Dendritic cell treated with granulocyte-macrophage colony-stimulating factor and Interleukin-4, amounts not matched to agents 40 ng/mL and 50 ng/mL, for 4 days (primary cell): ENCODE measurements at regions of chr18 and their contacts with region 1.

Region 1: DNA sequence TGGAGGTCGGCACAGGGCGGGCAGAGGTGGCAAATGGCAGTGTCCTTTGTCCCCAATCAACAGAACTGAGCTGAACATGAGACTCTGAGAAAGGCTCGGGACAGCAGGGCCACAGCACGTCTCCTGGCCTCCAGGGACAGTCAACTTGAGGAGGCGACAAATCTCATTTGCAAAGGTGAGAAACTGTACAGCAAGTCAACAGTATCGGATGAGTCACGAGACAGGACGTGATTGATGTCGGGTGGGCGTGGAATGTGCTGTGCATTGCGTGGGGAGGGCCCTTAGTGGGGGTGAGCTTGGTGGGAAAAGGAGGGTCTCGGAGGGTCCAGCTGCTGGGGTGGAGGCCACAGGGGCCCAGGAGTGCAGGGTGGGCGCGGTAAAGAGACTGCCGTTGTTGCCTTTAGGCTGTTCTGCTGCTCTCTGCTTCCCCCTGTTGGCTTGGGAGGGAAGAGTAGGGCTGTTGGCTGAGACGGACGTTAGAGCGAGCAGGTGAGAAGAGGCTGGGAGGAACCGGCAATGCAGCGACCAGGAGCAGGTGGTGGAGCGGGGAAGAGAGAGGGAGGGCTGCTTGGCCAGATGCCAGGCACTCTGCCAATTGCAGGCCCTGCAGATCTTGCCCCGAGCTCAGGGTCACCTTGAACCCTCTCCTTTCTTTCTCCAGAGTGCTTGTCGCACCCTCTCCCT is 164.3 kb downstream of the BCL2 start:
- H3K4me3 Mint-ChIP-seq: peak overlapping the region; percentile 65
- H3K27ac Mint-ChIP-seq: peak overlapping the region; percentile 64
- H3K4me1 Mint-ChIP-seq: peaks cover 26% of the 10 kb centered on the region
- H3K27me3 Mint-ChIP-seq: peaks cover 14% of the 10 kb centered on the region

Region 2: GRCh38 chr18:63131106-63131958 is 24.0 kb before region 1 on chr18:
- intact Hi-C with region 1: loop called (anchors 2 kb)
- H3K4me3 Mint-ChIP-seq: no peak overlapping the region
- H3K27ac Mint-ChIP-seq: no peak overlapping the region
- H3K4me1 Mint-ChIP-seq: peaks cover 13% of the 10 kb centered on the region
- H3K27me3 Mint-ChIP-seq: peaks cover 4% of the 10 kb centered on the region

Region 3: DNA sequence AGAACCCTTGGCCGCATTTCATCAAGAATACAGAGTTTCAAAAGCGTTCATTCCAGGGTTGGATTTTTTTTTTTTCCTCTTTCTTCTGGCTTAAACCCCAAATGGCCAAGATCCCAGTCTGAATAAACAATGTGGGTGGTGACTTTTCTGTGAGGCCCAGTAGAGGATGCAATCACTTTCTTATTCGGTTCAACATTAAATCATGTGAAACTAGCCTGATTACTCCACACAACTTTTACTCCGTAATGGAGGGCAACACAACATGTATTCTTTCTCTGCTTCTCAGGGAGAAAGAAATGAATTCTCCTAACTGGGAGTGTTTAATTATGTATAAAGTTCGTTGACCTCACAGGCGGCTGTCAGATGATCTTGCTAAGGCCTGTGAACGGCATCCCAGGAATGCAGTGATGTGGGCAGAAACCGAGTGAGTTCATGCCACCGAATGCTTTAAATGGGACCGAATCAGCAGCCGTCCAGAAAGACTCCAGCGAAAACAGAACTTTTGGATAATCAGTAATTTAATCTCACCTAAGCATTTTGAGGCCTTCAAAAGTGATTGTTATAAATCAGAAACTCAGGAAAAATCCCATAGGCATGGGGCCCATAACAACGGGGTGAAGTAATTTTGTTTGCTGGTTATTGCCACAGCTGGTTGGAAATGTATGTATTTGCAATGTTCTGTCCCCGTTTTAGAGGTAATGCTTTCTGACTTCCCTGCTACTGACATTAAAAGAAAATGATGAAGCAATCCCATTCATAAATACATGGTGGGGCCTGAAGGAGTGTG is 82.8 kb after region 1 on chr18:
- intact Hi-C with region 1: loop called (anchors 5 kb)
- H3K4me3 Mint-ChIP-seq: no peak overlapping the region
- H3K27ac Mint-ChIP-seq: peak overlapping the region; percentile 100
- H3K4me1 Mint-ChIP-seq: peaks cover 34% of the 10 kb centered on the region
- H3K27me3 Mint-ChIP-seq: no peaks in the 10 kb centered on the region